B cell (primary cell): ENCODE measurements at regions of chr19 and their contacts with region 1.

Region 1: GRCh38 chr19:39445265-39446111 is at the start of gene SUPT5H:
- DNase-seq: peak; percentile 99
- ATAC-seq: peak; percentile 94
- H3K4me3 ChIP-seq: peak within 1 kb of the TSS; percentile 69 to 98 (median 95)
- H3K4me3 Mint-ChIP-seq: peak within 1 kb of the TSS; percentile 97
- H3K27ac ChIP-seq: peak within 1 kb of the TSS; percentile 91 to 95
- H3K27ac Mint-ChIP-seq: peak within 1 kb of the TSS; percentile 97
- H3K4me1 ChIP-seq: peaks cover 42 to 56% of the 10 kb centered on the region in 2 donors
- H3K4me1 Mint-ChIP-seq: peaks cover 59% of the 10 kb centered on the region
- H3K27me3 ChIP-seq: no peaks in the 10 kb centered on the region
- H3K27me3 Mint-ChIP-seq: no peaks in the 10 kb centered on the region
- CTCF ChIP-seq: no peak
- total RNA-seq, gene SUPT5H: 195 and 203 TPM in 2 replicates

Region 2: GRCh38 chr19:39390755-39391592 is 54.5 kb before region 1 on chr19 and contains the starts of genes MED29 and PAF1:
- CTCF ChIA-PET with region 1: interaction called, 5 read pairs
- POLR2A ChIA-PET with region 1: interaction called, 8 read pairs
- intact Hi-C with region 1: loop called (anchors 1 kb)
- DNase-seq: peak; percentile 99
- ATAC-seq: peak; percentile 90
- H3K4me3 ChIP-seq: peak within 1 kb of the TSS; percentile 73 to 99 (median 90)
- H3K4me3 Mint-ChIP-seq: peak within 1 kb of the TSS; percentile 87
- H3K27ac ChIP-seq: peak within 1 kb of the TSS; percentile 96 to 97
- H3K27ac Mint-ChIP-seq: peak within 1 kb of the TSS; percentile 99
- H3K4me1 ChIP-seq: peaks cover 16 to 28% of the 10 kb centered on the region in 2 donors
- H3K4me1 Mint-ChIP-seq: peaks cover 39% of the 10 kb centered on the region
- H3K27me3 ChIP-seq: no peaks in the 10 kb centered on the region
- H3K27me3 Mint-ChIP-seq: no peaks in the 10 kb centered on the region
- CTCF ChIP-seq: no peak
- total RNA-seq, gene MED29: 47.5 and 53.0 TPM in 2 replicates
- total RNA-seq, gene PAF1: 54.6 and 59.9 TPM in 2 replicates

Region 3: DNA sequence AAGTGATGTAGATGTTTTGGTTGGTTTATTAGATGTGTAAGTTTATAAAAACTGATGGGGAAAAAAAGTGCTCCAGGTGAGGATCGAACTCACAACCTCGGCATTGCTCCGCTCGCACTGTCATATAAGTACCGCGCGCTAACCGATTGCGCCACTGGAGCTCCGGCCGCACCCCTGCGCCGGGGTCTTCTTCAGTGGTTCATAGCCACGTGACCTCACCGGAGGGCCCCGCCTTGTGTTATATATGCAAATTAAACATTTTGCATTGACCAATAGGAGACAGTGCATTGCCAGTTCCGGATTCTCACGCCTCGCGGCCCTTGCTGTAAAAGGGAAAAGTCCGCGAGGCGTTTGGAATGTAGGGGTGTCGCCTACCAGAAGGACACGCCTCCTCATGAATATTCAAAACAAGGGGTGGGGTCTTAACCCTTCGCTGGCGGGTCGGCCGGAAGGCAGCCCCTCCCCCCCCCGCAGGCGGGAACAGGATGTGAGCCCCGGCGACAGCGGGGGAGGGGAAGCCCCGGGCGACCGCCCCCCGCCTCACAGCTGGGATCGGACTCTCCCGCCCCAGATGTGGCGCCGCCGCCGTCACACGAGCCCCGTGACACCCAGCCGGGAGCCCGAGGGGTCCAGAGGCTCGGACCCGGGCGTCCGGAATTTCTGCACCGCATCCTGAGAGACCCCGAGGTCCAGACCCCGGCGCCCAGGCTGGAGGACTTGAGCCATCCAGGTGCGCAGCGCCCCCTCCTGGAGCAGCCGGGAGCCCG is 33.2 kb before region 1 on chr19 and contains the start of gene PLEKHG2:
- CTCF ChIA-PET with region 1: interaction called, 3 read pairs
- POLR2A ChIA-PET with region 1: interaction called, 7 read pairs
- intact Hi-C with region 1: loop called (anchors 1 kb)
- DNase-seq: peak; percentile 99
- ATAC-seq: peak; percentile 53
- H3K4me3 ChIP-seq: peak within 1 kb of the TSS; percentile 74 to 98 (median 92)
- H3K4me3 Mint-ChIP-seq: peak within 1 kb of the TSS; percentile 94
- H3K27ac ChIP-seq: peak within 1 kb of the TSS; percentile 100
- H3K27ac Mint-ChIP-seq: peak within 1 kb of the TSS; percentile 99
- H3K4me1 ChIP-seq: peaks cover 24 to 40% of the 10 kb centered on the region in 2 donors
- H3K4me1 Mint-ChIP-seq: peaks cover 49% of the 10 kb centered on the region
- H3K27me3 ChIP-seq: no peaks in the 10 kb centered on the region
- H3K27me3 Mint-ChIP-seq: no peaks in the 10 kb centered on the region
- CTCF ChIP-seq: no peak
- total RNA-seq, gene PLEKHG2: 154 and 167 TPM in 2 replicates

Region 4: GRCh38 chr19:39480337-39481228 is 35.1 kb after region 1 on chr19 and contains the start of gene TIMM50:
- CTCF ChIA-PET with region 1: interaction called, 3 read pairs
- POLR2A ChIA-PET with region 1: interaction called, 5 read pairs
- intact Hi-C with region 1: loop called (anchors 1 kb)
- DNase-seq: peak; percentile 95
- ATAC-seq: peak; percentile 99
- H3K4me3 ChIP-seq: peak within 1 kb of the TSS; percentile 65 to 95 (median 89)
- H3K4me3 Mint-ChIP-seq: peak within 1 kb of the TSS; percentile 96
- H3K27ac ChIP-seq: peak within 1 kb of the TSS; percentile 67 to 84
- H3K27ac Mint-ChIP-seq: peak within 1 kb of the TSS; percentile 94
- H3K4me1 ChIP-seq: peaks cover 14 to 21% of the 10 kb centered on the region in 2 donors
- H3K4me1 Mint-ChIP-seq: peaks cover 25% of the 10 kb centered on the region
- H3K27me3 ChIP-seq: no peaks in the 10 kb centered on the region
- H3K27me3 Mint-ChIP-seq: no peaks in the 10 kb centered on the region
- CTCF ChIP-seq: no peak
- total RNA-seq, gene TIMM50: 52.3 and 55.3 TPM in 2 replicates

Region 5: DNA sequence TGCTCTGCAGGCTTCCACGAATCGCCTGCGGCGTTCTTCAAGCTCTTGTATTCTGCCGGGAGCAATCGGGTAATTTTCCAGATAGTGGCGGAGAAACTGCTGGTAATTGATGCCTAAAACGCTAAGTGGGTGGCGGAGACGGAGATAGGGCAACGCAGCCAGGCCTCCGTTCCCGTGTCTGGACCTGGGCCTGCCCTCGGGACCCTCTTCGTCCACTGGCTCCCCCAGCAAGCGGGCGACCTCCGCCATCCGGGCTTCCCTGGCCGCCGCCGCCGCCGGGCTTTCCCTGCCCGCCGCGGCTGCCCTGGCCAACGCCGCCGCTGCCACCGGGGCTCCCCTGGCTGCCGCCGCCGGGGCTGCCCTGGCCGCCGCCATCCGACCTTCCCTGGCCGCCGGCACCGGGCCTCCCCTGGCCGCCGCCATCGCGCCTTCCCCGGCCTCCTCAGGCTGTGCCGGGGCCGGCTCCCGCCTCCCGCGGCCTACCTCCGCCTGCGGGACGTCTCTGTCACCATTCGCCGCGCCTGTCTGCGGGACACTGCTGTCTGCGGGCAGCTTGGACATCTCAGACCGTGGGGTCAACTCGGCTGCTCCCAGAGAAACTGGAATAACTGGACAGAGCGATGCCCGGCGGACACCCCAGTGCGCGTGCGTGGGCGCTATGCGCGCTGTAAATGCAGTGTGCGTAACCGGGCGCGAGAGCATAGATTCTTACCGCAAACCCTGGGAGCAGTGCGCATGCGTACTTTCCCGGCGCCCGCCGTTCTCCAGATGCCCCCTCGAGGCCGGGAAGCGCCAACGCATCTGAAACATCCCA is 94.2 kb after region 1 on chr19 and contains the start of gene EID2:
- CTCF ChIA-PET with region 1: interaction called, 25 read pairs
- POLR2A ChIA-PET with region 1: interaction called, 4 read pairs
- intact Hi-C with region 1: loop called (anchors 1 kb)
- DNase-seq: peak; percentile 96
- ATAC-seq: peak; percentile 94
- H3K4me3 ChIP-seq: peak within 1 kb of the TSS; percentile 66 to 97 (median 86)
- H3K4me3 Mint-ChIP-seq: peak within 1 kb of the TSS; percentile 98
- H3K27ac ChIP-seq: peak within 1 kb of the TSS; percentile 74 to 83
- H3K27ac Mint-ChIP-seq: peak within 1 kb of the TSS; percentile 93
- H3K4me1 ChIP-seq: peaks cover 21 to 26% of the 10 kb centered on the region in 2 donors
- H3K4me1 Mint-ChIP-seq: peaks cover 41% of the 10 kb centered on the region
- H3K27me3 ChIP-seq: no peaks in the 10 kb centered on the region
- H3K27me3 Mint-ChIP-seq: no peaks in the 10 kb centered on the region
- CTCF ChIP-seq: peak; percentile 80
- total RNA-seq, gene EID2: 13.8 and 14.1 TPM in 2 replicates

Region 6: DNA sequence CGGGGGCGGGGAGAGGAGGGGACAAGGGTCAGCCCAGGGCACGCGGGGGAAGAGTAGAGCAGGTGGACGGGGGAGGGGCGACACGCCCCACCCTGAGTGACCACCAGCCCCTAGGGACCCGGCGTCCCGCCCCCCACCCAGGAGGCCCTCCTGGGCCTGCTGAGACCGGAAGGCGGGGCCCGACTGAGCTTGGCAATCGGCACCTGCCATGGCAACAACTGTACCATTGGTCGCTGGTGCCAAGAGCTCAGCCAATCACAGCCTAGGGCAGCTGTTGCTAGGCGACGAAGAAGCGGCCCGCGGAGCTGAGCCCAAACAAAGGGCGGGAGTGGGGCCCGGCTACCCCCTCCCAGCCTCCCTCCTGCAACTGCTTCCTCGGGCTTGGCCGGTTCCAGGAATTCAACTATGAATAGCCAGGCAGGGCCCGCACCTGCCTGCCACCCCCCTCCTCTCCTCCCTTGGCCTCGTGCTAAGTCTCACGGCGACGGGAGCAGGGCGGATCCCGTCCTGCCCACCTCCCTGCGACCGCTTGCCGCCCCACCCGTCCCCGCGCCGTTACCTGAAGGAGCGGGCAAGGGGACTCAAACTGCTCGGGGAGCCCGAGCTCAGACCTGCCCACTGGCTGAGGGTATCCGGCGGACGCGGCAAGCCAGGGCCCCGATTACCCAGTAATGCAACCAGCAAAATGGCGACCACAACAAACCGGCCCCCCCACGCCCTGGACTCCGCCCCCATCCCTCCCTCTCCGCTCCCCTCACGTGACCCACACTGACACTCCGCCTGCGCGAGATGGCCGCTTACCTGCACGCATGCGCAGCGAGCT is 388.2 kb after region 1 on chr19 and contains the start of gene DYRK1B:
- CTCF ChIA-PET with region 1: no interaction called
- POLR2A ChIA-PET with region 1: no interaction called
- intact Hi-C with region 1: loop called (anchors 10 kb)
- DNase-seq: peak; percentile 99
- ATAC-seq: peak; percentile 84
- H3K4me3 ChIP-seq: peak within 1 kb of the TSS; percentile 66 to 100 (median 98)
- H3K4me3 Mint-ChIP-seq: peak within 1 kb of the TSS; percentile 87
- H3K27ac ChIP-seq: peak within 1 kb of the TSS; percentile 94 to 99
- H3K27ac Mint-ChIP-seq: peak within 1 kb of the TSS; percentile 92
- H3K4me1 ChIP-seq: peaks cover 16 to 26% of the 10 kb centered on the region in 2 donors
- H3K4me1 Mint-ChIP-seq: peaks cover 32% of the 10 kb centered on the region
- H3K27me3 ChIP-seq: no peaks in the 10 kb centered on the region
- H3K27me3 Mint-ChIP-seq: no peaks in the 10 kb centered on the region
- CTCF ChIP-seq: no peak
- total RNA-seq, gene DYRK1B: 36.6 and 44.4 TPM in 2 replicates